Calu3 (cell line): ENCODE measurements at regions of chr4 and their contacts with region 1.

Region 1: DNA sequence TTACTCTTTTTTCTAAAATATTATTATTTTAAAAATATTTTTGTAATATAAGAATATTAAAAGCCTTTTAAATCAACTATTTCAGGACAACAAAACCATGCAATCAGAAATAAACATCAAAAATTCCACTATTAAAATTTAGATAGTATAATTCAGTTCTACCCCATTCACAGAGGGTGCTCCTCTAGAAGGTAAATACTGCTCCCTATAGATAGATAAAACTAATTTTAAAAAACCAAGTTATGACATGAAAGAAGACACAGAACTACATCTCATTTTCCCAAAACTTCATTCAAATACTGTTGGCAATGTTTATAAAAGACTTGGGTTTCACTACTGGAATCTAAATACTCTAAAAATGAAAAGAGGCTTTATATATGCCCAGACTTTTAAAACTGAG is 219.3 kb downstream of the SPOCK3 start:
- DNase-seq: no peak
- H3K4me3 Mint-ChIP-seq: no peak overlapping the region
- H3K27ac Mint-ChIP-seq: no peak overlapping the region
- H3K4me1 Mint-ChIP-seq: no peaks in the 10 kb centered on the region
- H3K27me3 Mint-ChIP-seq: no peaks in the 10 kb centered on the region
- CTCF ChIP-seq: no peak

Region 2: GRCh38 chr4:166324321-166324720 is 690.6 kb before region 1 on chr4:
- CTCF ChIA-PET with region 1: no interaction called
- intact Hi-C with region 1: loop called (anchors 10 kb)
- DNase-seq: peak; percentile 50
- H3K4me3 Mint-ChIP-seq: no peak overlapping the region
- H3K27ac Mint-ChIP-seq: no peak overlapping the region
- H3K4me1 Mint-ChIP-seq: peaks cover 3% of the 10 kb centered on the region
- H3K27me3 Mint-ChIP-seq: no peaks in the 10 kb centered on the region
- CTCF ChIP-seq: peak; percentile 13

Region 3: DNA sequence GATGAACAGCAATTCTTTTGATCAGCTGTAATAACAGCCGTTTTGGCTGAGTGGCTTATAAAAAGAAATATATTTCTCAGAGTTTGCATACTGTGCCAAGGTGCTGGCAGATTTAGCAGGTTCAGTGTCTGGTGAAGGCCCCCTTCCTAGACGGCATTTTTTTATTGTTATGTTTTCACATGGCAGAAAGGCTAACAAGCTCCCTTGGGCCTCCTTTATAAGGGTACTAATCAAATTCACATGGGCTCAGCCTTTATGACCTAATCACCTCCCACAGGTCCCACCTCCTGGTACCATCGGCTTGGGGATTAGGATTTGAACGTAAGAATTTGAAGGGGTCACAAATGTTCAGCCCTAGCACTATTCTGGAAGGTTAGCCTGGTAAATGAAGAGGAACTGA is 212.6 kb before region 1 on chr4:
- CTCF ChIA-PET with region 1: no interaction called
- intact Hi-C with region 1: no loop called
- DNase-seq: no peak
- H3K4me3 Mint-ChIP-seq: no peak overlapping the region
- H3K27ac Mint-ChIP-seq: no peak overlapping the region
- H3K4me1 Mint-ChIP-seq: no peaks in the 10 kb centered on the region
- H3K27me3 Mint-ChIP-seq: no peaks in the 10 kb centered on the region
- CTCF ChIP-seq: no peak